Dendritic cell treated with granulocyte-macrophage colony-stimulating factor and Interleukin-4, amounts not matched to agents 40 ng/mL and 50 ng/mL, for 4 days (primary cell): ENCODE measurements at regions of chr2 and their contacts with region 1.

Region 1: DNA sequence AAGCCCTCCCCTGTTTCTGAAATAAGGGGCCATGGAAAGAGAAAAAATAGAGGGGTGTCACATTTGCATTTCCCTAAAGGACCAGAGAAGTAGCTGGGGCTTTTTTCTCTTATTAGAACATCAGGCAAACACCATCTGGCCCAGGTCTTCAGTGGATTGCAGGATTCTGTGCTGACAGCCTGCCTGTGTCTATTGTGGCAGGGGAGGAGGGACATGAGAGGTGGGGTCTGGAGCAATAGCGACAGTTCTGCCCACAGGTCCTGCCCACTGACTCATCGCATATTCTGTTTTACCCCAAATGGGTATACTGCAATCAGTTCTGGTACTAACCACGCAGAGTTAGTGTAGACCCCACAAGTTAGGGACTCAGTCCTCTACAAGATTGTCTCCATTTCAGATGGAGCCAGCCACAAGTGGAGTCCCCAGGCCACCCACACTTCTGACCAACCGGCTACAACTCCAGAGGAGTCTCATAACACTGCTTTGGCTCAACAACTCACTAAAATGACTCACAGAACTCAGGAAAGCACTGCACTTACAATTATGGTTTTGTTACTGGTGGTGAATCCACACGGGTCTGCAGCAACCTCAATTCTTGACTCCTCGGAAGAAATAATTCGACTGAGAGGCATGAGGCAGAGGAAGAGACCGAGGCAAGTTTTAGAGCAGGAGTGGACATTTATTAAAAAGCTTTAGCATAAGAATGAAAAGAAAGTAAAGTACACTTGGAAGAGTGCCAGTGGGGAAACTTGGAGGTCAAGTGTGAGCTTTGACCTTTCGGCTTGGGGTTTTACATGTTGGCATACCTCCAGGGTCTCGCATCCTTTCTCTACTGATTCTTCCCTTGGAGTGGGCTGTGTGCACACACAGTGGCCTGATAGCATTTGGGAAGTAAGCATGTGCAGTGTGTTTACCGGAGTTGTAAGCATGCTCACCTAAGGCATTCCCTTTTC is 146.4 kb upstream of the SPATS2L start:
- H3K4me3 Mint-ChIP-seq: no peak overlapping the region
- H3K27ac Mint-ChIP-seq: no peak overlapping the region
- H3K4me1 Mint-ChIP-seq: peaks cover 27% of the 10 kb centered on the region
- H3K27me3 Mint-ChIP-seq: peaks cover under 1% of the 10 kb centered on the region

Region 2: GRCh38 chr2:200199576-200200263 is 39.6 kb after region 1 on chr2:
- intact Hi-C with region 1: loop called (anchors 5 kb)
- H3K4me3 Mint-ChIP-seq: no peak overlapping the region
- H3K27ac Mint-ChIP-seq: peak overlapping the region; percentile 68
- H3K4me1 Mint-ChIP-seq: peaks cover 51% of the 10 kb centered on the region
- H3K27me3 Mint-ChIP-seq: no peaks in the 10 kb centered on the region